Activated CD4-positive, alpha-beta T cell treated with anti-CD3 and anti-CD28 coated beads for 36 hours (primary cell): ENCODE measurements at regions of chr16 and their contacts with region 1.

Region 1: GRCh38 chr16:35194681-35195080 is 1735.3 kb downstream of the TP53TG3F start:
- DNase-seq: no peak
- ATAC-seq: no peak
- H3K4me3 Mint-ChIP-seq: no peak overlapping the region
- H3K27ac Mint-ChIP-seq: no peak overlapping the region
- H3K4me1 Mint-ChIP-seq: no peaks in the 10 kb centered on the region
- H3K27me3 Mint-ChIP-seq: no peaks in the 10 kb centered on the region

Region 2: GRCh38 chr16:35140293-35140986 is 54.2 kb before region 1 on chr16:
- CTCF ChIA-PET with region 1: no interaction called
- POLR2A ChIA-PET with region 1: no interaction called
- intact Hi-C with region 1: loop called in 1 of 2 experiments (anchors 5 kb)
- DNase-seq: no peak
- ATAC-seq: no peak
- H3K4me3 Mint-ChIP-seq: no peak overlapping the region
- H3K27ac Mint-ChIP-seq: no peak overlapping the region
- H3K4me1 Mint-ChIP-seq: no peaks in the 10 kb centered on the region
- H3K27me3 Mint-ChIP-seq: no peaks in the 10 kb centered on the region